T-cell (primary cell): ENCODE measurements at regions of chr4 and their contacts with region 1.

Region 1: GRCh38 chr4:142600971-142601370 is 245.1 kb downstream of the INPP4B start:
- DNase-seq: no peak
- ATAC-seq: no peak
- H3K4me3 ChIP-seq: no peak overlapping the region
- H3K4me3 Mint-ChIP-seq: no peak overlapping the region
- H3K27ac ChIP-seq: no peak overlapping the region
- H3K27ac Mint-ChIP-seq: no peak overlapping the region
- H3K4me1 ChIP-seq: no peaks in the 10 kb centered on the region
- H3K4me1 Mint-ChIP-seq: peaks cover 2 to 11% (median 5%) of the 10 kb centered on the region in 3 donors
- H3K27me3 ChIP-seq: no peaks in the 10 kb centered on the region
- H3K27me3 Mint-ChIP-seq: no peaks in the 10 kb centered on the region

Region 2: GRCh38 chr4:142307857-142308256 is 293.1 kb before region 1 on chr4:
- CTCF ChIA-PET with region 1: no interaction called
- POLR2A ChIA-PET with region 1: interaction called in 1 of 2 experiments, 14 read pairs
- DNase-seq: no peak
- ATAC-seq: no peak
- H3K4me3 ChIP-seq: no peak overlapping the region
- H3K4me3 Mint-ChIP-seq: no peak overlapping the region
- H3K27ac ChIP-seq: no peak overlapping the region
- H3K27ac Mint-ChIP-seq: no peak overlapping the region
- H3K4me1 ChIP-seq: peaks cover 0 to 3% of the 10 kb centered on the region in 2 experiments
- H3K4me1 Mint-ChIP-seq: peaks cover 37 to 66% (median 50%) of the 10 kb centered on the region in 3 donors
- H3K27me3 ChIP-seq: no peaks in the 10 kb centered on the region
- H3K27me3 Mint-ChIP-seq: no peaks in the 10 kb centered on the region